ENCODE measurements at regions of chr20 and their contacts with region 1.

Region 1: DNA sequence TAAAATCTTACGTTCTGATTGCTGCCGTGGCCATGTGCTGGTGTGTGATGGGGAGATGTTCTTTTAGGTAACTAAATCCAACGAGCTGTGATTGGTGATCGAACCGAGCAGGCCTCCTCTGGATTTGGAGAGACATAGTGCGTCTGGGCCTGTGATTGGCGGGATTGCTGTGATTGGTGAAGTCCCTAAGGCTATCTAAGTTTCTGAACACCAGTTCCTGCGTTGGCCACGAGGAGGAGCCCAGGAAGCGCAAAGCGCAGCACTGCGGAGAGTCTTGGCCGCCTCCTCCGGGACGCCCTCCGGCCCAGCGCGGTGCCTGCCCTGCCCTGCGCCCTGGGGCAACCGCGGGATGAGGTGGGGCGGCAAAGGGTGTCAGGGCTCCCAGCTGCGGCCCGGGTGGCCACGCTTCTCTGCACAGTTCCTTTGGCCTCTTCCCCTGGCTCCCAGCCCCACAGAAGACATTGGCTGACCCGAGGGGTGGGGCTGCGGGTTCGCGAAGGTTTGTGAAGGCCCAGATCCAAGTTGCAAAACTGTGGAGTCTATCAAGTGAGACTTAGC is 33.0 kb downstream of the HNF4A start:
- DNase-seq: peak; percentile 18 to 84 (median 62)
- H3K4me3 ChIP-seq: peak overlapping the region in 4 of 59 donors; percentile 6 to 29 (median 22)
- H3K27ac ChIP-seq: no peak overlapping the region
- H3K27me3 ChIP-seq: peaks cover 0 to 17% (median 0%) of the 10 kb centered on the region in 45 donors
- CTCF ChIP-seq: peak; percentile 43 to 78 (median 64)

Region 2: GRCh38 chr20:44153636-44154043 is 234.9 kb before region 1 on chr20:
- intact Hi-C with region 1: no loop called
- DNase-seq: no peak
- H3K4me3 ChIP-seq: no peak overlapping the region
- H3K27ac ChIP-seq: peak overlapping the region in 1 of 59 donors; percentile 34
- H3K27me3 ChIP-seq: peaks cover 0 to 22% (median 0%) of the 10 kb centered on the region in 45 donors
- CTCF ChIP-seq: no peak

Region 3: DNA sequence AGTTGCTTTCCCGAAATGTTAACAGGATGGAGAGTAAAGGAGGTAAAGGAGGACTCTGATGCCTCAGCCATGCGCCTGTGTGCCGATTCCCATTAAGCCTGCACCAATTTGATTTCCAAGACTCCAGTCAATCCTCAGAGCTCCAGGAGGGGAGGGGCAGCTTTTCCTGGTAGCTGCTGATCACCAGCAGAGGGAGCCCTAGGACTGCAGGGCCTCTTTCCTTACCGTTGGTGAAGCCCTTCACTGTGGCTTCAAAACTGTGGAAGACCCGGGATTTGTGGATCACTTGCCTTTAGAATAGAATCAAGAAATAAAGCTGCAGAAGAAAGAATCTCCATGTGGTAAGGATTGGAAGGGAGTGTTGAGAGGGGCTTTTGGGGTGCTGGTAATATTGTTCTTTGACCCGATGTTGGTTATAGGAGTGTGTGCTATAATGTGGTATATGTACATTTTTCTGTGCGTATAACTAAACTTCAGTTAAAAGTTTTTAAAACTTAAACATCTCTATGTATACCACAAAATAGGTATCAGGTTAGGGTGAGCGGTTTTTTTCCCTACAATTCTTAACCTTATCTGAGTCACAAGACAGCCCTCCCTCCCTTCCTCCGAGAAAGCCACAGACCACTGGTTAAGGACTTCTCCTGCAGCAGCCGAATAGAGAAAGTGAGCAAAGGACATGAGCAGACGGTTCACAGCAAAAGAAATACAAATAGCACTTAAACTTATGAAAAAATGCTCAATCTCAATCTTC is 171.0 kb before region 1 on chr20:
- intact Hi-C with region 1: loop called in 1 of 2 experiments (anchors 2 kb)
- DNase-seq: peak; percentile 12 to 67 (median 62)
- H3K4me3 ChIP-seq: no peak overlapping the region
- H3K27ac ChIP-seq: peak overlapping the region in 3 of 59 donors; percentile 2 to 36 (median 13)
- H3K27me3 ChIP-seq: no peaks in the 10 kb centered on the region
- CTCF ChIP-seq: peak; percentile 40 to 89 (median 74)

Region 4: GRCh38 chr20:44516491-44516890 is 127.9 kb after region 1 on chr20:
- intact Hi-C with region 1: no loop called
- DNase-seq: no peak
- H3K4me3 ChIP-seq: peak overlapping the region in 2 of 59 donors; percentile 11 to 17
- H3K27ac ChIP-seq: peak overlapping the region in 21 of 59 donors; percentile 7 to 55 (median 26)
- H3K27me3 ChIP-seq: no peaks in the 10 kb centered on the region
- CTCF ChIP-seq: no peak

Region 5: DNA sequence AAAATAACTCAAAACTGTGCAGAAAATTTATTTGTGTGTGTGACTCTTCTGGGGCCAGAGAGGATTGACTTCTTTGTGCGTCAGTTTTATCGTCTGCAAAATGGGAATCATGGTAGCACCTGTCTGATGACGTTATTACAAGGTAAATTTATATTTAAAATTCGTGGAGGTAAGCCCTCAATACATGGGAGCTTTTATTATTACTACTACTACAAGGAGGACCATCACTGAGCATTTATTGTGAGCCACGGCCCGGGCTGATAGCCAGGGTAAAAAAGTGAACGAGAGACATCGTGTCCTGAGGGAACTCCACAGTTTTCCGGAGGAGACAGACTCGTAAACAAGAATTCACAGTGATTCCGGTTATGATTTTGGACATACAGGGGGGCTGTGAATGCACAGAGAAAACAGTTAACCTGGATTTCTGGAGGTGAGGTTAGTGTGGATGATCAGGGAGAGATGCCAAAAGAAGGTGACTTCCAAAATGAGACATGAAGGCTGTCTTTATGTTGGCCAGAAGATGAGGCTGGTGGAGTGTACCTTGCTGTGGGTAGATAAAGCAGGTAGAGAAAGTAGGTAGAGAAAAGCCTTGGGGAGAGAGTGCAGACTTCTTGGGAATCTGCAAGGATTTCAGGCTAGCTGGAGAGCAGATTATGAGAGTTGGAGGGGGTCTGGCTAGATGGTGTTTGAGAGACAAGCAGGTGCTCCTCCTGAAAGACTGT is 143.9 kb after region 1 on chr20:
- intact Hi-C with region 1: loop called in 1 of 2 experiments (anchors 5 kb)
- DNase-seq: no peak
- H3K4me3 ChIP-seq: peak overlapping the region; percentile 66 to 99 (median 87)
- H3K27ac ChIP-seq: peak overlapping the region in 58 of 59 donors; percentile 33 to 94 (median 84)
- H3K27me3 ChIP-seq: no peaks in the 10 kb centered on the region
- CTCF ChIP-seq: no peak

Region 6: DNA sequence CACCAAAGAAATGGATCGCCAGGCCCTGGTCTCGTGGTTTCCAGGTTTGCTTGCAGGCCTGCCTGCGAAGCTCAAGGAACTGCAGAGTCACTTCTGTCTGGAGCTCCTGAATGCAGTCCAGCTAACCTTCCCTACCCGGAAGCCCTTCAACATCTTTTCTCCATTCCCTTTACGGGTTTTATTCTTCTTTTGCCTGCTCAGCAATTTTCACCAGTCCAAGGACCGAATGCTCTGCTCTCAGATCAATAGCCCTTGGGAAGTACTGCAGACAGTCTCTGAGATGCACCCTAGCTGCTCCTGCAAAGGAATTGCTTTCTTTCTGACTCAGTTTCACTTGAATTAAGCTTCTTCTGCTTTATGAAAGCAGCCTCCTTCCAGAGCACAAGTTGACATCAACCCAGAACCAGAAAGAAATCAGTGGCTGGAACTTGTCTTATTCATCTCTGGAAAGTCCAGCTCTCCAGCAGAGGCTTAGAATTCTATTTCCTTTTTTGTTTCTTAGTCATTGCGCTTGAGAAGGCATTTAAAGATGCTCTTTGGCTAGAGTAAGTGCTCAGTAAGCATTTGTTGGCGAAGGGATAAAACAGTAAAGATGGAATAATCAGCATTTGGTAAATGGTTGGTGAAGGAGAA is 478.3 kb after region 1 on chr20:
- intact Hi-C with region 1: loop called in 1 of 2 experiments (anchors 5 kb)
- DNase-seq: no peak
- H3K4me3 ChIP-seq: peak overlapping the region in 13 of 59 donors; percentile 36 to 63 (median 49)
- H3K27ac ChIP-seq: no peak overlapping the region
- H3K27me3 ChIP-seq: no peaks in the 10 kb centered on the region
- CTCF ChIP-seq: no peak

Measured in dorsolateral prefrontal cortex (tissue), 120 donors.